Dorsolateral prefrontal cortex (tissue), 120 donors: ENCODE measurements at regions of chr14 and their contacts with region 1.

Region 1: GRCh38 chr14:104639889-104640548 is 35.4 kb upstream of the TMEM179 start:
- DNase-seq: peak in 9 of 10 donors; percentile 37 to 87 (median 63)
- H3K4me3 ChIP-seq: peak overlapping the region in 1 of 59 donors; percentile 23
- H3K27ac ChIP-seq: no peak overlapping the region
- H3K27me3 ChIP-seq: peaks cover 0 to 5% (median 0%) of the 10 kb centered on the region in 45 donors
- CTCF ChIP-seq: peak; percentile 61 to 98 (median 92)

Region 2: DNA sequence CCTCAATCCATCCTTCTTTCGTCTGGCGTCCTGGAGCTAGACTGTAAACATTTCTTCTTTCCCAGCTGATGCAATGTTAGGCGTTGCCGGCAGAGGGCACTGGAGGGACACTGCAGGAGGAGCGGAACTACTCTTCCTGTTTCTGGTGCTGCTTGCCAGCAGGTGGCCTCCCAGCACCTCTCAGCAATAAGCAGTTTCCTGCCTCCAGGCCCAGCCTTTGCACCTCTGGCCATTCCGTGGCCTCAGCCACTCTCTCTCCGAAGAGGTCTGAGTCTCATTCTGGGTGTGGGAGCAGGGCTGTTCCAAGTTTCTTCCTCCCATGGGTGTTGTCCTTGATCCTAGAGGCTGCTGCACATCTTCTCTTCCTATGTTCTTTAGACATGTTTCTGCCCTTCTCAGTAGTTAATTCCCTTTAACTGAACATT is 562.0 kb before region 1 on chr14:
- intact Hi-C with region 1: loop called in 1 of 2 experiments (anchors 10 kb)
- DNase-seq: peak; percentile 73 to 92 (median 86)
- H3K4me3 ChIP-seq: peak overlapping the region in 2 of 59 donors; percentile 20 to 30
- H3K27ac ChIP-seq: no peak overlapping the region
- H3K27me3 ChIP-seq: peaks cover 0 to 9% (median 0%) of the 10 kb centered on the region in 45 donors
- CTCF ChIP-seq: peak; percentile 81 to 100 (median 99)

Region 3: DNA sequence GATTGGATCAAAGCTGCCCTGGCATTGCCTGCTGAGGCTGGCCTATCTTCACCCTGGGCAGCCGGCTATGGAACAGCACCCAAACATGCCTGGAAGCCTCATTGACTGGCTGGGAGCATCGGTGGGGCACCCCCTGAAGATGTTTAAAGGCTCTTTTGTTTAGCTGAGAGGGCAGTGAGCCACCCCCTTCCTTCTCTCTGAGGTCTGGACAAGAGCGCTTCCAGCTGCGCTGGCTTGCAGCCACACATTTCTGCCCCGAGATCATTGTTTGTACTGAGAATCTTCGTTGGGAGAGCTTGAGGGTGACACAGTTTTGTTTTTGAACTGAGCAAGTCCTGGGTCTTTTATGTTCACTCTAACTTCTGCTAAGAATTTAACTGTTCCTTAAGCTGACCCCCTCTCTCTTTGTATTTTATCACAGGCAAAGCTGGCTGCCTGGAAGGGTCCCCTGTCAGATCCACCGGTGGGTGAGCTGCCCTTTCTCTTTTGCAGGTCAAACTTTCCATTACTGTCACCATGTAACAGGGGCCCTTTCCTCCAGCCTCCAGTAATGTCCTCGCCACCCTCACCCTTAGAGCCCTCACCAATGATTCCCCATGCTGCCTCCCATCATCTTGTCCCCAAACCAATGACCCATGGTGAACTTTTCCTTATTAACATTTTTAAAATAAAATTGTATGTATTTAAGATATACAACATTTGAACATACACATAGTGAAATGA is 289.4 kb before region 1 on chr14:
- intact Hi-C with region 1: loop called in 1 of 2 experiments (anchors 10 kb)
- DNase-seq: peak; percentile 25 to 96 (median 86)
- H3K4me3 ChIP-seq: peak overlapping the region in 2 of 59 donors; percentile 14 to 28
- H3K27ac ChIP-seq: peak overlapping the region in 45 of 59 donors; percentile 1 to 86 (median 61)
- H3K27me3 ChIP-seq: peaks cover 0 to 20% (median 4%) of the 10 kb centered on the region in 45 donors
- CTCF ChIP-seq: peak in 24 of 56 donors; percentile 9 to 56 (median 28)

Region 4: GRCh38 chr14:104588066-104588857 is 51.8 kb before region 1 on chr14:
- intact Hi-C with region 1: loop called in 1 of 2 experiments (anchors 2 kb)
- DNase-seq: peak in 1 of 10 donors; percentile 57
- H3K4me3 ChIP-seq: no peak overlapping the region
- H3K27ac ChIP-seq: no peak overlapping the region
- H3K27me3 ChIP-seq: peaks cover 0 to 6% (median 0%) of the 10 kb centered on the region in 45 donors
- CTCF ChIP-seq: peak in 42 of 56 donors; percentile 14 to 68 (median 36)